CD14-positive monocyte (primary cell): ENCODE measurements at regions of chr1 and their contacts with region 1.

Region 1: DNA sequence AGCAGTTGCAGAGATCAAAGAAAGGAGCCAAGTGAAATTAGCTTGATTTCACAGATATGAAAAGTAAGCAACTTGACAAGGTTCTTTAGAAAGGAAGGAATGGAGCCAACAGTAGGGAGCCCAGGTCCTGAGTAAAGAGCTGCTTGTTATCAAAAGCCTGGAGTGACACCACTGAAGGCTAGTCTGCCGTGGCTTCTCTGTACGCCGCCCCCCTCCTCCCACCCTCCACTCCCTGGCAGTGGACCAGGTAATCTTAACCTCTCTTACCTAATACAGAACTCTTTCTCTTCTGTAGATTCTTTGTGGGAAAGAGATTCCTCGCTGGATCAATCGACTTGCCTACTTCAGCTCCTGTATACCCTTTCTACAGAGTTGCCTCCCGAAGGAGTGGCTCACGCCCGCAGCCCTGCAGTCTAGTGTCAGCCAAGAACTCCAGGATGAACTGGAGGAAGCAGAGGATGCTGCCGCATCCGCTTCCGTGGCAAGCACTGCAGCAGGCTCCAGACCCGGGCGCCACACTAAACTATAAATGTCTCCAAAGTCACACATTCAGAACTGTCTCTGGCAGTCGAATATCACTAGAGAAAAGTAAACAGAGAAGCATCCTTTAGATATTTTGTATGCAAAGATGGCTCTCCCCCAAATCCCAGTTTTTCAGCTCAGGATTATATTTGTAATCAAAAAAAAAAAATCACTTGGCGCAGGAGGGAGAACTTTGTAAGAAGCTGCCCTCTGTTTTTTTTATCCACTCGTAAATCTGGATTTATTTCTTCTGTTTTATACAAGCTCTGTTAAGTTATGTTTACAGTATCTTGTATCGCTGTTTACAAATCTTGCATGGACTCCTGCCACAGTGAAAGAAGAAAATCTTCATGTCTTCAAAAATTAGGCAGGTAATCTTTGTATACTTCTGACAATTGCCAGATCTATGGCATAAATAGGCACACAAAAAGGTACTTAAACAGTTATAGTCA is 52.6 kb downstream of the DESI2 start:
- DNase-seq: no peak
- H3K4me3 ChIP-seq: no peak overlapping the region
- H3K4me3 Mint-ChIP-seq: no peak overlapping the region
- H3K27ac ChIP-seq: no peak overlapping the region
- H3K27ac Mint-ChIP-seq: peak overlapping the region in 2 of 7 donors; percentile 41 to 50
- H3K4me1 ChIP-seq: no peaks in the 10 kb centered on the region
- H3K4me1 Mint-ChIP-seq: no peaks in the 10 kb centered on the region
- H3K27me3 ChIP-seq: no peaks in the 10 kb centered on the region
- H3K27me3 Mint-ChIP-seq: no peaks in the 10 kb centered on the region
- CTCF ChIP-seq: no peak

Region 2: GRCh38 chr1:244761279-244761678 is 55.7 kb after region 1 on chr1:
- intact Hi-C with region 1: loop called in 1 of 2 experiments (anchors 2 kb)
- DNase-seq: no peak
- H3K4me3 ChIP-seq: no peak overlapping the region
- H3K4me3 Mint-ChIP-seq: no peak overlapping the region
- H3K27ac ChIP-seq: no peak overlapping the region
- H3K27ac Mint-ChIP-seq: no peak overlapping the region
- H3K4me1 ChIP-seq: no peaks in the 10 kb centered on the region
- H3K4me1 Mint-ChIP-seq: no peaks in the 10 kb centered on the region
- H3K27me3 ChIP-seq: no peaks in the 10 kb centered on the region
- H3K27me3 Mint-ChIP-seq: peaks cover 3 to 20% (median 8%) of the 10 kb centered on the region in 3 donors
- CTCF ChIP-seq: no peak